CD14-positive monocyte (primary cell): ENCODE measurements at regions of chr3 and their contacts with region 1.

Region 1: DNA sequence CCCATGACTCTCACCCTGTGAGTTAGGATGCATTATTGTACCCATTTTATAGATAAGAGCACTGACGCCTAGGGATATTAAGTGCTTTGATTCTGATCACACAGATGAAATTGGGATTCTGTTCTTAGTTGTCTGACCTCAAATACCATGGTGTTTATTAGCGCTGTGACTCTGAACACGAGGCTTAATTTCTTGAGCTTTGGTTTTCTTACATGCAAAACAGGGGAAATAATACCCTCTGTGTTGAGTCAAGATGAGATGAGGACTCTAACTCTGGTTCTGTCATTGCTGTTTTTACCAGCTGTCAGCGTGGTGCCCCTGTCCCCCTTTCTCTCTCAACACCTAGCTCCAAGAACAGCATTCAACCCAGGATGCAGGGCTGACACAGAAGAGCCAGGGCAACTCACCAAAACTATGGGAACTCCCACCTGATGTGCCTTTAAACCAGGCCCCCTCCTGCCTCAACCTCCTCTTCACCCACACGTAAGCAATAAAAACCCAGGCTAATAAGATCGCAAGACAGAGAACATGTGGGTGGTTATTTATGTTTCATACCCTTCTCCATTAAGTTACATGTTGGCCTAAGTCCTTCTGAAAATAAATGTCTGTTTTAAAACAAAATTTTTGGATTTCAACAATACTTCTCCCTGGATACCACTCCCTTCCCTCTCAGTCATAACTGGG is 100.1 kb upstream of the SPATA12 start:
- DNase-seq: no peak
- H3K4me3 ChIP-seq: no peak overlapping the region
- H3K4me3 Mint-ChIP-seq: no peak overlapping the region
- H3K27ac ChIP-seq: no peak overlapping the region
- H3K27ac Mint-ChIP-seq: peak overlapping the region in 1 of 7 donors; percentile 37
- H3K4me1 ChIP-seq: no peaks in the 10 kb centered on the region
- H3K4me1 Mint-ChIP-seq: no peaks in the 10 kb centered on the region
- H3K27me3 ChIP-seq: no peaks in the 10 kb centered on the region
- H3K27me3 Mint-ChIP-seq: peaks cover 0 to 3% (median 2%) of the 10 kb centered on the region in 3 donors
- CTCF ChIP-seq: no peak

Region 2: GRCh38 chr3:56878074-56878473 is 82.3 kb before region 1 on chr3:
- intact Hi-C with region 1: no loop called
- DNase-seq: no peak
- H3K4me3 ChIP-seq: no peak overlapping the region
- H3K4me3 Mint-ChIP-seq: no peak overlapping the region
- H3K27ac ChIP-seq: no peak overlapping the region
- H3K27ac Mint-ChIP-seq: no peak overlapping the region
- H3K4me1 ChIP-seq: no peaks in the 10 kb centered on the region
- H3K4me1 Mint-ChIP-seq: peaks cover 5% of the 10 kb centered on the region
- H3K27me3 ChIP-seq: no peaks in the 10 kb centered on the region
- H3K27me3 Mint-ChIP-seq: peaks cover 0 to 2% (median 0%) of the 10 kb centered on the region in 3 donors
- CTCF ChIP-seq: no peak

Region 3: GRCh38 chr3:56915966-56916586 is 44.3 kb before region 1 on chr3:
- intact Hi-C with region 1: loop called in 1 of 2 experiments (anchors 10 kb)
- DNase-seq: peak; percentile 52 to 68 (median 55)
- H3K4me3 ChIP-seq: peak overlapping the region; percentile 38 to 78 (median 40)
- H3K4me3 Mint-ChIP-seq: peak overlapping the region; percentile 75 to 88
- H3K27ac ChIP-seq: peak overlapping the region; percentile 11 to 56
- H3K27ac Mint-ChIP-seq: peak overlapping the region; percentile 8 to 80 (median 50)
- H3K4me1 ChIP-seq: peaks cover 36 to 43% of the 10 kb centered on the region in 2 donors
- H3K4me1 Mint-ChIP-seq: peaks cover 46% of the 10 kb centered on the region
- H3K27me3 ChIP-seq: no peaks in the 10 kb centered on the region
- H3K27me3 Mint-ChIP-seq: peaks cover 0 to 1% (median 0%) of the 10 kb centered on the region in 3 donors
- CTCF ChIP-seq: no peak